ENCODE measurements at regions of chrX and their contacts with region 1.

Region 1: GRCh38 chrX:47193475-47194193 is at the start of gene UBA1:
- DNase-seq: peak; percentile 93
- ATAC-seq: peak; percentile 75
- H3K4me3 ChIP-seq: peak within 1 kb of the TSS; percentile 71 to 96 (median 76)
- H3K4me3 Mint-ChIP-seq: peak within 1 kb of the TSS; percentile 98
- H3K27ac ChIP-seq: peak within 1 kb of the TSS; percentile 83 to 95
- H3K27ac Mint-ChIP-seq: peak within 1 kb of the TSS; percentile 99
- H3K4me1 ChIP-seq: peaks cover 48 to 60% of the 10 kb centered on the region in 2 donors
- H3K4me1 Mint-ChIP-seq: peaks cover 63% of the 10 kb centered on the region
- H3K27me3 ChIP-seq: no peaks in the 10 kb centered on the region
- H3K27me3 Mint-ChIP-seq: no peaks in the 10 kb centered on the region
- CTCF ChIP-seq: peak; percentile 58
- total RNA-seq, gene UBA1: 166 and 173 TPM in 2 replicates

Region 2: DNA sequence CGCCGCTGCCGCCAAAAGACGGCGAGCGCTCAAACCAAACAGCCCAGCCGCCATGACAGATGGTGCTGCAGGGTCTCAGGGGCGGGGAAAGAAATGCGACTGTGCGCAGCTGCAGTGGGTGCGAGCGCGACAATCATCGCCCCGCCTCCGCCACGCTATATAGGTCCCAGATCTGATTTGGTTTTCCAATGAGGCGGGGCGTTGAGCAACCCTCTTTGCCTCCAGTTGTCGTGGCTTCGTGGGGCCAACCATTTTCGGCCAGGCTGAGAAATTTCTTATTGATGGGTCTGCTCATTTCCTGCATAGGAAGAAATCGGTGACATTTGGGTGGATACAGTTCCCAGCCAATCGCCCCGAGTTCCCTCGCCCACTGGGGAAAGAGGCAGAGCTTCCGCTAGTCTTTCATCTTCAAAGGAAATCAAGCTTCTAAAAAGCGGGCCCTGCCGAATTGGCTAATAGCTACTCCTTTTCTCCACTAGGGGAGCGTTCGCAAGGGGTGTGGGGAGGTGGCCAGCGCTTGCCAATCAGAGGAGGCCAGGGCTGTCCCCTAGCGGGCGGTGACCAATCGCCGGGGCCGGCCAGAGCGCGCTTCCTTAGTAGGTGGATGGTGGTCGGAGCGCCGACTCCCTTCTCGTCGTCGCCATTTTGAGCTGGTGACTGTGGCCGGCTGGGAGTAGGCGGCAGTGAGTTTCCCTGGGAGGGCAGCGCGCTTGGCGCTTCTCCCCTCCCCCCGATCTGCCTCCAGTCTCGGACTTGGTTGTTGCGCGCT is 48.8 kb before region 1 on chrX and contains the starts of genes NDUFB11 and RBM10:
- CTCF ChIA-PET with region 1: no interaction called
- POLR2A ChIA-PET with region 1: interaction called, 7 read pairs
- intact Hi-C with region 1: loop called (anchors 1 kb)
- DNase-seq: peak; percentile 92
- ATAC-seq: peak; percentile 92
- H3K4me3 ChIP-seq: peak within 1 kb of the TSS; percentile 71 to 83 (median 72)
- H3K4me3 Mint-ChIP-seq: peak within 1 kb of the TSS; percentile 97
- H3K27ac ChIP-seq: peak within 1 kb of the TSS; percentile 94 to 95
- H3K27ac Mint-ChIP-seq: peak within 1 kb of the TSS; percentile 99
- H3K4me1 ChIP-seq: peaks cover 20 to 32% of the 10 kb centered on the region in 2 donors
- H3K4me1 Mint-ChIP-seq: peaks cover 35% of the 10 kb centered on the region
- H3K27me3 ChIP-seq: no peaks in the 10 kb centered on the region
- H3K27me3 Mint-ChIP-seq: no peaks in the 10 kb centered on the region
- CTCF ChIP-seq: peak; percentile 66
- total RNA-seq, gene NDUFB11: 51.0 and 56.8 TPM in 2 replicates
- total RNA-seq, gene RBM10: 51.5 and 51.6 TPM in 2 replicates

Region 3: DNA sequence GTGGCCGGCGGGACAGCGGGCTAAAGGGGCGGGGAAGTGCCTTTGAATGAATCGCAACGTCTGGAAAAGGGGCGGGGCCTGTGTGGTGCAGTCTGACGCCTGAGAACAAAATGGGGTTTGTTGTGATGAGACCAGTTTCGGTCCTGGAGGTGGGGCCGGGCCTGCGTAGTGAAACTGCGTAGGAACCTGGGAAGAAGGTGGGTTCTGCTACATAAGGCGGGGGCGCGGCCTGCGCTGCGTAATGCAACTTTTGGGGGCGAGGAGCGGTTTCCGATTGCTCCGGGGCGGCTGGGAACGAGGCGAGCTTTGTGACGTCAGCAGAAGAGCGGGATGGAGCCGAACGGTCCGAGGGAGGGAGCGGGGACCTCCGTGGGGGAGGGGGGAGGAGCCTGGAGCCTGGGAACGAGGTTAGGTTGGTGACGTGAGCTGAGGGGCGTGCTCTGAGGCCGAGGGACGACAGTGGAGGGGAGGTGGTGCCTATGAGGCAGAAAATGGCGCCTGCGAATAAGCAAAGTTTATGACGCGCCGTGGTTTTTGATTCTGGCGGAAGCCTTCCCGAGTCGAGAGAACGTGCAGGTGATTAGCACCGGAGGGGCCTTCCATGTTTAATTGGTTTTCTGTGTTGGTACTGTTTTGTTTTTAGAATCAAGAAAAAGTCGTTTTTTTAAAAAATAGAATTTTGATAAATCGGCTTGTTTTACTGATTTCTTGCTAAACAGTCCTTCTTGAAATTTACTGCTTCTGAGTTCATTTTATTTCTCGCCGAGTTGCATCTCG is 39.9 kb after region 1 on chrX:
- CTCF ChIA-PET with region 1: no interaction called
- POLR2A ChIA-PET with region 1: interaction called, 9 read pairs
- intact Hi-C with region 1: loop called (anchors 1 kb)
- DNase-seq: peak; percentile 96
- ATAC-seq: peak; percentile 88
- H3K4me3 ChIP-seq: peak overlapping the region; percentile 67 to 82 (median 75)
- H3K4me3 Mint-ChIP-seq: peak overlapping the region; percentile 94
- H3K27ac ChIP-seq: peak overlapping the region; percentile 96 to 99
- H3K27ac Mint-ChIP-seq: peak overlapping the region; percentile 99
- H3K4me1 ChIP-seq: peaks cover 0 to 8% of the 10 kb centered on the region in 2 donors
- H3K4me1 Mint-ChIP-seq: peaks cover 21% of the 10 kb centered on the region
- H3K27me3 ChIP-seq: no peaks in the 10 kb centered on the region
- H3K27me3 Mint-ChIP-seq: no peaks in the 10 kb centered on the region
- CTCF ChIP-seq: no peak

Region 4: DNA sequence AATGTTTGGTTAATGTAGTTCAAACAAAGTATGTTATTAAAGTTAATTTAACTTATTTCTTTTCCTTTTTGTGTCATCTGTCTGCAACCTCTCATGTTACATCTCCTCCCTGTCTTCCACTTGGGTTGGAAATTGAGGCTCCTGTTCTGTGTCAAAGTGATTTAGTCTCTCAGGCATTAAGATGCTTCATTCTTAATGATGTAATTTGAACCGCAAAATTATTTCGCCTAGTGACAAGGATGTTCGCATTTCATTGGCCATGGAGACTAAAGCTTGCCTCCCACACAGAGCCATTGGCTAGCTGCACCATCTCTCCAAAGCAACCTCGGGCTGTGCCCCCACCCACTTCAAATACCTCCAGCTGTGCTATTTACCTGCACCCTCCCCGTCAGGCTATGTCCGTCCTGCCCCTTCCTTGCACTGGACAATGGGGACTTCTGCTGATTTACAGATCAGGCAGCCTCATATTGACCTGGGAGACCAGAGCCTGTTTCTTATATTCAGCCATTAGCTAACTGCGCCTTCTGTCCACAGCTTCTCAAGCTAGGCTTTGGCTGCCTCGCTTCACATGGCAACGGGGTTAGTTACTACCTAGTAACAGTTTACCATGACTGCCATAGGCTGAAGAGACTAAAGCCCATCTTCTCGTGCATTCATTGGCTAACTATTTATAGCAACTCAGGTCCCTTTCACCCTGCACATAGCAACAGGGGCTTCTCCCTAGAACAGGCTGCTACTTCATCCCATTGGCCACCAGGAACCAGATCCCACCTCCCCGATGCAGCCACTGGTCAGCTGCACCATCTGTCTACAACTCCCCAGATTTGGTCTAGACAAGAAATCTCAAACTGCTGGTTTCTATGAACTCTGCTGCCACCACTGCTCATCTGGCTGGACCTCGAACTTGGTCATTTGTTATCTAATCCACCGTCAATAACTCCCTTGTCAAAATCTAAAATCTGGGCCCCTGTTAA is 168.2 kb after region 1 on chrX:
- CTCF ChIA-PET with region 1: interaction called, 3 read pairs
- POLR2A ChIA-PET with region 1: interaction called, 4 read pairs
- intact Hi-C with region 1: loop called (anchors 1 kb)
- DNase-seq: peak; percentile 90
- ATAC-seq: peak; percentile 77
- H3K4me3 ChIP-seq: peak overlapping the region; percentile 39 to 63 (median 55)
- H3K4me3 Mint-ChIP-seq: peak overlapping the region; percentile 90
- H3K27ac ChIP-seq: peak overlapping the region; percentile 86 to 92
- H3K27ac Mint-ChIP-seq: peak overlapping the region; percentile 90
- H3K4me1 ChIP-seq: peaks cover 17 to 29% of the 10 kb centered on the region in 2 donors
- H3K4me1 Mint-ChIP-seq: peaks cover 34% of the 10 kb centered on the region
- H3K27me3 ChIP-seq: no peaks in the 10 kb centered on the region
- H3K27me3 Mint-ChIP-seq: no peaks in the 10 kb centered on the region
- CTCF ChIP-seq: no peak

Region 5: GRCh38 chrX:47482512-47483309 is 289.1 kb after region 1 on chrX and contains the start of gene ZNF41:
- CTCF ChIA-PET with region 1: no interaction called
- POLR2A ChIA-PET with region 1: interaction called, 3 read pairs
- intact Hi-C with region 1: loop called (anchors 1 kb)
- DNase-seq: peak; percentile 87
- ATAC-seq: peak; percentile 82
- H3K4me3 ChIP-seq: peak within 1 kb of the TSS; percentile 47 to 77 (median 66)
- H3K4me3 Mint-ChIP-seq: peak within 1 kb of the TSS; percentile 91
- H3K27ac ChIP-seq: peak within 1 kb of the TSS; percentile 80 to 90
- H3K27ac Mint-ChIP-seq: peak within 1 kb of the TSS; percentile 96
- H3K4me1 ChIP-seq: peaks cover 4 to 30% of the 10 kb centered on the region in 2 donors
- H3K4me1 Mint-ChIP-seq: peaks cover 34% of the 10 kb centered on the region
- H3K27me3 ChIP-seq: no peaks in the 10 kb centered on the region
- H3K27me3 Mint-ChIP-seq: no peaks in the 10 kb centered on the region
- CTCF ChIP-seq: no peak
- total RNA-seq, gene ZNF41: 17.4 and 18.9 TPM in 2 replicates

Region 6: DNA sequence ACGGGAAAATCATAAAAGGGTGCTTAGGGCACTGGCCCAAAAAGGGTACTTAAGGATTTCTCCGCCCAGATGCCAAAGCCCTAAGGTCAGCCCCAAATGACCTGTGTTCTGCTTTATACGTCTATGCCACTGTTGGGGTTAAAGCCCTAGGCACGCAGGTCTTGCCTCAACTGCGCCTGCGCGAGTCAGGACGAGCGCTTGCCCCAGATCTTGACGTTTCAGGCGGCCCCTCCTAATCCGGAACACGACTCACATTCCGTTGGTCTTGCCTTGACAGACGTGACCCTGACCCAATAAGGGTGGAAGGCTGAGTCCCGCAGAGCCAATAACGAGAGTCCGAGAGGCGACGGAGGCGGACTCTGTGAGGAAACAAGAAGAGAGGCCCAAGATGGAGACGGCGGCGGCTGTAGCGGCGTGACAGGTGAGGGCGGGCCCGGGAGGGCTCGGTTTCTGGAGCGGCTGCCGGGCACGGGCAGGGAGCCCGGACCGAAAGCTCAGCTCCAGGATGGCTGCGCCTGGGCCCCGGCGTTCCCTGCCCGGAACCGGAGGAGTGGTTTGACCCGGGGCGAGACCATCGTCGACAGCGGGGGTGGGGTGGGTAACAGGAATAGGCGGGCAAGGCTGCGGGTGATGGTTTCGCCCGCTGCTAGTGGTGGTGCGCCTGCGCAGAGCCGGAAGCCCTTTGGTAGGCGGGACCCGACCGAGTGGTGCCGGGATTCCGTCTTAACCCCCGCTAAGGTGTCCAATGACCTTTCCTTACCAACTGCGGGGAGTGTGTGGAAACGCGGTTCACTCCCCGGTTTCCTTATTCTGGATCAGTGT is 367.4 kb after region 1 on chrX and contains the start of gene ARAF:
- CTCF ChIA-PET with region 1: no interaction called
- POLR2A ChIA-PET with region 1: interaction called, 11 read pairs
- intact Hi-C with region 1: no loop called
- DNase-seq: peak; percentile 97
- ATAC-seq: peak; percentile 85
- H3K4me3 ChIP-seq: peak within 1 kb of the TSS; percentile 55 to 81 (median 75)
- H3K4me3 Mint-ChIP-seq: peak within 1 kb of the TSS; percentile 87
- H3K27ac ChIP-seq: peak within 1 kb of the TSS; percentile 89 to 91
- H3K27ac Mint-ChIP-seq: peak within 1 kb of the TSS; percentile 96
- H3K4me1 ChIP-seq: peaks cover 6 to 29% of the 10 kb centered on the region in 2 donors
- H3K4me1 Mint-ChIP-seq: peaks cover 35% of the 10 kb centered on the region
- H3K27me3 ChIP-seq: no peaks in the 10 kb centered on the region
- H3K27me3 Mint-ChIP-seq: no peaks in the 10 kb centered on the region
- CTCF ChIP-seq: no peak
- total RNA-seq, gene ARAF: 103 and 127 TPM in 2 replicates

Measured in B cell (primary cell).